ENCODE measurements at regions of chr4 and their contacts with region 1.

Region 1: DNA sequence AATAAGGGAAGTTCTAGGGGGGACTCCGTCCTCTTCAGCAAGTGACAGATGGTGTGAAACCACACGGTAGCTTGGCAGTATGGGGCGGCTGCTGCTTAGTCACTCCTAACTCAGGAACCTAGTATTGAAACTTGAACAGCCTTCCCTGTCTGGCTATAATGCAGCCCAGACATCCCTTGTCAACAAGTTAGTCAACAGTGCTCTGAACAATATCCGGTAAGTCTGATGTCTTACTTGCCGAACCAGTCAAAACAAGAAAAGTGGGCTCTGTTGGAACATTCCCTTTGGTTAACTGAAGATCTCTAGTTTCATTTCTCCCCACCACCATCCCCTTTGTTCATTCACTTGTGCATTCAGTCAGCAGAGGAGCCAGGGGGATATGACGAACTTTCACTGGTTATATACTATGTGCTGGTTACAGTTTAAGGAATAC is 18.7 kb upstream of the CXCL13 start:
- DNase-seq: peak; percentile 89
- H3K4me3 Mint-ChIP-seq: peak overlapping the region; percentile 73
- H3K27ac Mint-ChIP-seq: peak overlapping the region; percentile 92
- H3K4me1 Mint-ChIP-seq: peaks cover 56% of the 10 kb centered on the region
- H3K27me3 Mint-ChIP-seq: no peaks in the 10 kb centered on the region

Region 2: DNA sequence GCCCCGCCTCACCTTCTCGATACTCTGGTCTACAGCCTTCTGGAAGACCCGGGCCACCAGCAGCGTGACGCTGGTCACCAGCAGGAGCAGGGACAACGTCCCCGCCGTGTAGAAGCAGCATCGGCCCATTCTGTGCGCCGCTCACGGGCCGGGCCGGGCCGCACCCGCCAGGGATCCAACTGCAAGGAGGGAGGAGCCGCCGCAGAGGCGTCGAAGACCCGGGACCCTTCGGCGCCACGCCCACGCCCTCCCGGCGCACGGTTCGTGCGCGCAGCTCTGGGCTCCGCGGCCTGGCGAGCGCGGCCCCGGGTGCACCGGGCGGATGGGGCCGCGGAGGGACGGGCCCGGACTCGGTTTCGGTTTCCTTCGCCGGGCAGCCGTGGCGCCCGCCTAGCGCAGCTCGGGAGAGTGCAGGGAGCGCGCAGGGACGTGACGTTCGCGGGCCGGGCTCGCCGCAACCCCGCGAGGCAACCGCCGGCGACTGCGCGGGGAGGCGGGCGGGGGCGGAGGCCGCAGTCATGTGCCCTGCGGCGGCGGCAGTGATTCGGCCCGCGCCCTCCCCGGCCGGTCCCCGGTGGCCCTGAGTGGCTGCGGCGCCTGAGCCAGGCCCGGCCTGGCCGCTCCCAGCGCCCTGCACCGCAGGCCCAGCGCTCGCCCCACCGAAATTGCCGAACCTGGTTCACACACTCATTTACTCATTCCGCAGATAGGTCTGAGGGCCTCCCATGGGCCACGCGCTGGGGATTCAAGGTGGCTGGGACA is 1373.4 kb before region 1 on chr4 and contains the start of gene SCARB2:
- intact Hi-C with region 1: loop called (anchors 5 kb)
- DNase-seq: peak; percentile 93
- H3K4me3 Mint-ChIP-seq: peak within 1 kb of the TSS; percentile 86
- H3K27ac Mint-ChIP-seq: peak within 1 kb of the TSS; percentile 83
- H3K4me1 Mint-ChIP-seq: peaks cover 23% of the 10 kb centered on the region
- H3K27me3 Mint-ChIP-seq: peaks cover 32% of the 10 kb centered on the region
- total RNA-seq, gene SCARB2: 1.5 and 1.7 TPM in 2 replicates

Region 3: GRCh38 chr4:77025643-77026321 is 561.2 kb before region 1 on chr4:
- intact Hi-C with region 1: loop called (anchors 1 kb)
- DNase-seq: peak; percentile 71
- H3K4me3 Mint-ChIP-seq: peak overlapping the region; percentile 51
- H3K27ac Mint-ChIP-seq: peak overlapping the region; percentile 50
- H3K4me1 Mint-ChIP-seq: peaks cover 34% of the 10 kb centered on the region
- H3K27me3 Mint-ChIP-seq: peaks cover 6% of the 10 kb centered on the region

Region 4: GRCh38 chr4:77600521-77601451 is 13.8 kb after region 1 on chr4:
- intact Hi-C with region 1: loop called (anchors 1 kb)
- DNase-seq: peak; percentile 78
- H3K4me3 Mint-ChIP-seq: no peak overlapping the region
- H3K27ac Mint-ChIP-seq: peak overlapping the region; percentile 69
- H3K4me1 Mint-ChIP-seq: peaks cover 31% of the 10 kb centered on the region
- H3K27me3 Mint-ChIP-seq: no peaks in the 10 kb centered on the region

Region 5: GRCh38 chr4:77629885-77630284 is 42.9 kb after region 1 on chr4:
- intact Hi-C with region 1: loop called (anchors 2 kb)
- DNase-seq: peak; percentile 58
- H3K4me3 Mint-ChIP-seq: peak overlapping the region; percentile 16
- H3K27ac Mint-ChIP-seq: peak overlapping the region; percentile 12
- H3K4me1 Mint-ChIP-seq: peaks cover 14% of the 10 kb centered on the region
- H3K27me3 Mint-ChIP-seq: no peaks in the 10 kb centered on the region

Region 6: GRCh38 chr4:77862478-77863216 is 275.7 kb after region 1 on chr4 and contains the start of gene MRPL1:
- intact Hi-C with region 1: loop called (anchors 2 kb)
- DNase-seq: peak; percentile 96
- H3K4me3 Mint-ChIP-seq: peak within 1 kb of the TSS; percentile 98
- H3K27ac Mint-ChIP-seq: peak within 1 kb of the TSS; percentile 100
- H3K4me1 Mint-ChIP-seq: peaks cover 47% of the 10 kb centered on the region
- H3K27me3 Mint-ChIP-seq: peaks cover 4% of the 10 kb centered on the region
- total RNA-seq, gene MRPL1: 65.0 and 72.7 TPM in 2 replicates

Measured in activated CD4-positive, alpha-beta T cell treated with anti-CD3 and anti-CD28 coated beads, Interleukin-2, amount 10 ng/mL, durations not matched to agents 24 days and 14 days (primary cell).